Naive thymus-derived CD4-positive, alpha-beta T cell (primary cell): ENCODE measurements at regions of chr2 and their contacts with region 1.

Region 1: GRCh38 chr2:12716282-12717190 is at the start of gene TRIB2:
- DNase-seq: peak; percentile 78 to 90 (median 88)
- ATAC-seq: peak; percentile 88
- H3K4me3 ChIP-seq: peak within 1 kb of the TSS; percentile 86
- H3K4me3 Mint-ChIP-seq: peak within 1 kb of the TSS; percentile 88 to 100 (median 99)
- H3K27ac ChIP-seq: peak within 1 kb of the TSS; percentile 88
- H3K27ac Mint-ChIP-seq: peak within 1 kb of the TSS; percentile 93 to 97 (median 96)
- H3K4me1 ChIP-seq: peaks cover 10 to 18% of the 10 kb centered on the region in 2 donors
- H3K4me1 Mint-ChIP-seq: peaks cover 32 to 65% (median 56%) of the 10 kb centered on the region in 7 donors
- H3K27me3 ChIP-seq: no peaks in the 10 kb centered on the region
- H3K27me3 Mint-ChIP-seq: peaks cover 0 to 15% (median 0%) of the 10 kb centered on the region in 5 donors
- total RNA-seq, gene TRIB2: 63.1 to 125 (median 110) TPM

Region 2: GRCh38 chr2:11344342-11344955 is 1372.1 kb before region 1 on chr2 and contains the start of gene ROCK2:
- CTCF ChIA-PET with region 1: no interaction called
- POLR2A ChIA-PET with region 1: no interaction called
- intact Hi-C with region 1: loop called in 1 of 2 experiments (anchors 10 kb)
- DNase-seq: peak; percentile 45 to 81 (median 58)
- ATAC-seq: peak; percentile 82
- H3K4me3 ChIP-seq: peak within 1 kb of the TSS; percentile 87
- H3K4me3 Mint-ChIP-seq: peak within 1 kb of the TSS; percentile 93 to 100 (median 98)
- H3K27ac ChIP-seq: peak within 1 kb of the TSS; percentile 76
- H3K27ac Mint-ChIP-seq: peak within 1 kb of the TSS; percentile 87 to 96 (median 91)
- H3K4me1 ChIP-seq: peaks cover 13% of the 10 kb centered on the region in 2 donors
- H3K4me1 Mint-ChIP-seq: peaks cover 18 to 43% (median 33%) of the 10 kb centered on the region in 7 donors
- H3K27me3 ChIP-seq: no peaks in the 10 kb centered on the region
- H3K27me3 Mint-ChIP-seq: peaks cover 0 to 25% (median 0%) of the 10 kb centered on the region in 5 donors
- total RNA-seq, gene ROCK2: 12.0 to 23.9 (median 18.8) TPM

Region 3: DNA sequence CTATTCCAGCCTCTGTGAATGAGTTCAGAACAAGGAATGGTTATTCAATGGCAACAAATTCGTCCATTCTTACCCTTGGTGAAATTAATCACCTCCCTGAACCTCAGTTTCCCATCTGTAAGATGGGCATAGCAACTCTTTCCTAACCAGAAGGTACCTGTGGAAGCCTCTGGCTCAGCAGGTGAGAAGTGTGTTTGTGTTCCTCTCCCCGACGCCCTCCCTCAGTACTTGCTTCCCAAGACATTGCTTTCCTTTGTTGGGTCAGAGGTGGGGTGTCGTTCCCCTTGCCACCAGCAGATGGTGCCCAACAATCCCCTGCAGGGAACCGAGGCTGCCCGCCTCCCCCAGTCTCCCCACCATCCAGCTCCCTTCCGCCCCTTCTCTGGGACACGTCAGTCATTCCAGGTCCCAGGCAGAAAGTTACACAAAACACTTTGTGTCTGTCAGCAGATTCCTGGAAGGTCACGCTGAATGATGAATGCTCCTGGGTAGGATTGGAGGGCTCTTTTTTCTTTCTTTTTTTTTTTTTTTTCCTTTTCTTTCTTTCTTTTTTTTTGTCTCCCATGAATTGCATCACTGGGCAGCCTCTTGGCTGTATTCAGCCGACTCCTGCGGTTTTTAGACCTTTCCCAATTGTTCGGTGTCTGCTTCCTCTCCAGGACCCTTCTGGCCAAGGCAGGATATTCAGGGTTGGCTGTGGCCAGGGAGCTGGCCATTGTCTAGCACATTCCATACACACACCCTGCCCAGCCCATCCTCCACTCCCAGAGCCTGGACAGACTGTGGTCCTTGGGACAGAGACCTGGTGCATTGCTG is 852.8 kb before region 1 on chr2:
- CTCF ChIA-PET with region 1: interaction called, 4 read pairs
- POLR2A ChIA-PET with region 1: no interaction called
- intact Hi-C with region 1: loop called (anchors 1 kb)
- DNase-seq: peak; percentile 38 to 71 (median 57)
- ATAC-seq: peak; percentile 88
- H3K4me3 ChIP-seq: peak overlapping the region; percentile 14
- H3K4me3 Mint-ChIP-seq: peak overlapping the region; percentile 28 to 71 (median 54)
- H3K27ac ChIP-seq: no peak overlapping the region
- H3K27ac Mint-ChIP-seq: peak overlapping the region in 2 of 9 donors; percentile 13 to 22
- H3K4me1 ChIP-seq: peaks cover 0 to 7% of the 10 kb centered on the region in 2 donors
- H3K4me1 Mint-ChIP-seq: peaks cover 8 to 14% (median 11%) of the 10 kb centered on the region in 7 donors
- H3K27me3 ChIP-seq: no peaks in the 10 kb centered on the region
- H3K27me3 Mint-ChIP-seq: peaks cover 0 to 28% (median 0%) of the 10 kb centered on the region in 5 donors

Region 4: DNA sequence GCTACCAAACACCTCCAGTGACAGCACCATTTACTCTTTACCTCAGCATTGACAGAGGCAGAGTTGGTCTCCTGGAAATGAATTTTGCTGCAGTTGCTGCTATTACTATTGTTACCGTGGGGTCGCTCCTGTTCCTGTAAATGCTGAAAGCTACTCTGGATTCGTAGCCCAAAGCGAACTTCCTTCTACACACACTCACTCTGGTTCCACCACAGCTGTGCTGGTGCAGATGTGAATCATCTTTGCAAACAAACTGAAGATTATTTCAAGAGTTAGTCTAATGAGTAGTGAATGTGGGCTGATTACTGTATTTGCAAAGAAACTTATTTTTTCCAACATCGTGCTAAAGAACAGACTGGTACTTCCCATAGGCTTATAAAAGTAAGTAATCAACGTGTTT is 666.1 kb before region 1 on chr2:
- CTCF ChIA-PET with region 1: no interaction called
- POLR2A ChIA-PET with region 1: interaction called, 9 read pairs
- intact Hi-C with region 1: loop called in 1 of 2 experiments (anchors 1 kb)
- DNase-seq: peak in 1 of 9 donors; percentile 42
- ATAC-seq: peak; percentile 58
- H3K4me3 ChIP-seq: no peak overlapping the region
- H3K4me3 Mint-ChIP-seq: peak overlapping the region in 3 of 10 donors; percentile 4 to 64 (median 32)
- H3K27ac ChIP-seq: no peak overlapping the region
- H3K27ac Mint-ChIP-seq: peak overlapping the region in 2 of 9 donors; percentile 26 to 69
- H3K4me1 ChIP-seq: peaks cover 2 to 16% of the 10 kb centered on the region in 2 donors
- H3K4me1 Mint-ChIP-seq: peaks cover 2 to 63% (median 43%) of the 10 kb centered on the region in 7 donors
- H3K27me3 ChIP-seq: no peaks in the 10 kb centered on the region
- H3K27me3 Mint-ChIP-seq: peaks cover 0 to 19% (median 0%) of the 10 kb centered on the region in 5 donors

Region 5: DNA sequence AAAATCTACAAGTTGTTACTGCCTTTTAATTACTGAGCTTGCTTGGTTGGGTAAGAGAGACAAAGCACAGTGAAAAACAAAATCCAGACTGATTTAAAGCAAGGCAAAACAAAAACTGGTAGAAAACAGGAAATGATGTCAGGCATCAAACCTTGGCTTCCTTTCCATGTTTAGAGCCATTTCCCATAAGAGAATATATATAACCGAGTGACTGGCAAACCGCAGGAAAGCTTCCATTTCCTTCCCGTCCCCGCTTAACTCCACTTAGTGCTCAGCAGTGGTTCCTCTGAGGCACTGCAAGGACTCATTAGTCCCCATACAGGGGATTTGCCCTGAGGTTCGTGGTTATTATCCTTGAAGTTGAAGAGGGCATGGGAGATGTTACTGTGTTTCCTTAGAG is 523.8 kb before region 1 on chr2:
- CTCF ChIA-PET with region 1: no interaction called
- POLR2A ChIA-PET with region 1: no interaction called
- intact Hi-C with region 1: loop called in 1 of 2 experiments (anchors 5 kb)
- DNase-seq: peak in 6 of 9 donors; percentile 14 to 51 (median 35)
- ATAC-seq: peak; percentile 61
- H3K4me3 ChIP-seq: peak overlapping the region; percentile 9
- H3K4me3 Mint-ChIP-seq: peak overlapping the region in 9 of 10 donors; percentile 0 to 67 (median 57)
- H3K27ac ChIP-seq: no peak overlapping the region
- H3K27ac Mint-ChIP-seq: peak overlapping the region; percentile 62 to 95 (median 85)
- H3K4me1 ChIP-seq: peaks cover 0 to 13% of the 10 kb centered on the region in 2 donors
- H3K4me1 Mint-ChIP-seq: peaks cover 12 to 26% (median 21%) of the 10 kb centered on the region in 7 donors
- H3K27me3 ChIP-seq: no peaks in the 10 kb centered on the region
- H3K27me3 Mint-ChIP-seq: peaks cover 0 to 6% (median 0%) of the 10 kb centered on the region in 5 donors

Region 6: DNA sequence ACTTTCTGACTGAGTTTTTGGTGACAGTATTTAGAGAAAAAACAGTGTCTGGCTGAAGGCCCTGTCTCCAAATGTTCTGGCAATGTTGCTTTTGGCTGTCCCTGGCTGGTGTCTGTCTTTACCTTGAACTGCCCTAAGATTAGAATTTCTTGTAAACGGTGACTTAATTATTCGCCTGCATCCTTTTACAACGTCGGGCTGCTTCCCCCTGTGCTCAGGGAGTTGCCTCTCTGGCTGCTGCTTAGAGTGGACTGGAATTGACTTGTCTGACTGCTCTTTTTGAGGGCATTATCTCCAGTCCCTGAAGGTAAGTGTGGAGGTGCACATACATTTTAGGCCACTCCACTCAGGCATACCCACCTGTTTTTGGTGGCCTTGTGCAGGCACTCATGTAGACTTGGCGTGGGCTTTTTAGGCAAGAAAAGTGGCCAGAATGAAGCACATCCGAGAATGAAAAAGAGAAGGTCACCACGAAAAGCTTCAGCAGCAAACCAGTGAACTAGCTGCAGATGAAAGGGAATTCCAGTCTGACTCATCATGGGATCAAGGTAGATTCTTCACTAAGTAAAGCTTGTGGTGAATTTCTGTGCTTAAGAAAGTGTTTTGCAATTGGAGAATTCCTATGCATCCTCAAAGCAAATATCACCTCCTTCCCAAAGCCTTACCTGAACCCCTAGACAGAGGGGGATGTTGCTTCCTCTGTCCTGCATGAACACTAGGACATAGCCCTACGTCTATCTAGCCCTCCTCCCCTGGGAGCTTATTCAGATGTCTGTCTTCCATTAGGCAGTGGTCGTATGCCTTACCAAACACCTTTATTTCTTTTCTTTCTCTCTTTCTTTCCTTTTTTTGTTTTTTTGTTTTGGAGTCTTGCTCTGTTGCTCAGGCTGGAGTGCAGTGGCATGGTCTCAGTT is 230.1 kb before region 1 on chr2:
- CTCF ChIA-PET with region 1: interaction called, 5 read pairs
- POLR2A ChIA-PET with region 1: interaction called, 11 read pairs
- intact Hi-C with region 1: loop called in 1 of 2 experiments (anchors 1 kb)
- DNase-seq: no peak
- ATAC-seq: no peak
- H3K4me3 ChIP-seq: no peak overlapping the region
- H3K4me3 Mint-ChIP-seq: peak overlapping the region in 9 of 10 donors; percentile 22 to 84 (median 75)
- H3K27ac ChIP-seq: peak overlapping the region; percentile 42
- H3K27ac Mint-ChIP-seq: peak overlapping the region in 8 of 9 donors; percentile 83 to 97 (median 92)
- H3K4me1 ChIP-seq: peaks cover 28 to 63% of the 10 kb centered on the region in 2 donors
- H3K4me1 Mint-ChIP-seq: peaks cover 50 to 80% (median 70%) of the 10 kb centered on the region in 7 donors
- H3K27me3 ChIP-seq: no peaks in the 10 kb centered on the region
- H3K27me3 Mint-ChIP-seq: no peaks in the 10 kb centered on the region

Region 7: GRCh38 chr2:12675352-12675795 is 41.2 kb before region 1 on chr2:
- CTCF ChIA-PET with region 1: no interaction called
- POLR2A ChIA-PET with region 1: no interaction called
- intact Hi-C with region 1: no loop called
- DNase-seq: no peak
- ATAC-seq: no peak
- H3K4me3 ChIP-seq: no peak overlapping the region
- H3K4me3 Mint-ChIP-seq: no peak overlapping the region
- H3K27ac ChIP-seq: no peak overlapping the region
- H3K27ac Mint-ChIP-seq: peak overlapping the region in 1 of 9 donors; percentile 49
- H3K4me1 ChIP-seq: no peaks in the 10 kb centered on the region
- H3K4me1 Mint-ChIP-seq: peaks cover 0 to 8% (median 4%) of the 10 kb centered on the region in 7 donors
- H3K27me3 ChIP-seq: no peaks in the 10 kb centered on the region
- H3K27me3 Mint-ChIP-seq: peaks cover 0 to 5% (median 0%) of the 10 kb centered on the region in 5 donors

Region 8: DNA sequence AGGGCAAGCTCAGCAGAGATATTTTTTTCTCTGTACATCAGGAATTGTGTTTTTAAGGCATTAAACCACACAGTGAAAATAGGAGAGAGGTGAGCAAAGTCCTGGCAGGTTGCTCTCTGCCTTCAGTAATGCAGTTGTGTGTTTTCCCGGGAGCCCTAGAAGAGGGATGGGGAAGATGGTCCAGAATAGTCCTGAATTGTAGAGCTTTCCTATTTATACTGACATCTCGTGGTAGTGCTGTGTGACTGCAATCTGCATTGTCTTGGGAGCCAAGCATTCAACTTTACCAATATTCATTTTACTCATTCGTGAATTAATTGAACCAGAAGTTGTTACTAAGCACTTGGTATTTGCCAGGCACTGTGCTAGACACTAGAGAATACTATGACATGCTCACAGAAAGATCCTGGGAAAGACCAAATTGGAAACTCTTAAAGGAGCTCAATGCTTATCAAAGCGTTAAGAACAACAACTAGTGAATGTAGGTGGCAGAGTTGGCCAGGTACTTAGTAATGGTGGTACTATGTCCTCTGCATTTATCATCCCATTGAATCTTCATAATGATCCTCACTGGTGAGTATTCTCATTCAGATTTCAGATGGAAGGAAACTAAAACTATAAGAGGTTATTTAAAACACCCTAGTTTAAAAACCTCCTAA is 214.8 kb after region 1 on chr2:
- CTCF ChIA-PET with region 1: interaction called, 41 read pairs
- POLR2A ChIA-PET with region 1: interaction called, 12 read pairs
- intact Hi-C with region 1: loop called (anchors 1 kb)
- DNase-seq: peak in 4 of 9 donors; percentile 17 to 33 (median 26)
- ATAC-seq: peak; percentile 63
- H3K4me3 ChIP-seq: no peak overlapping the region
- H3K4me3 Mint-ChIP-seq: no peak overlapping the region
- H3K27ac ChIP-seq: no peak overlapping the region
- H3K27ac Mint-ChIP-seq: no peak overlapping the region
- H3K4me1 ChIP-seq: no peaks in the 10 kb centered on the region
- H3K4me1 Mint-ChIP-seq: peaks cover 0 to 12% (median 7%) of the 10 kb centered on the region in 7 donors
- H3K27me3 ChIP-seq: no peaks in the 10 kb centered on the region
- H3K27me3 Mint-ChIP-seq: peaks cover 0 to 50% (median 0%) of the 10 kb centered on the region in 5 donors

Region 9: GRCh38 chr2:14420851-14421250 is 1704.3 kb after region 1 on chr2:
- CTCF ChIA-PET with region 1: no interaction called
- POLR2A ChIA-PET with region 1: no interaction called
- intact Hi-C with region 1: no loop called
- DNase-seq: no peak
- ATAC-seq: no peak
- H3K4me3 ChIP-seq: no peak overlapping the region
- H3K4me3 Mint-ChIP-seq: no peak overlapping the region
- H3K27ac ChIP-seq: no peak overlapping the region
- H3K27ac Mint-ChIP-seq: no peak overlapping the region
- H3K4me1 ChIP-seq: no peaks in the 10 kb centered on the region
- H3K4me1 Mint-ChIP-seq: no peaks in the 10 kb centered on the region
- H3K27me3 ChIP-seq: no peaks in the 10 kb centered on the region
- H3K27me3 Mint-ChIP-seq: no peaks in the 10 kb centered on the region